Endothelial cell of umbilical vein (primary cell): ENCODE measurements at regions of chr1 and their contacts with region 1.

Region 1: GRCh38 chr1:61641578-61642336 is 83.2 kb downstream of the TM2D1 start:
- DNase-seq: peak; percentile 75
- H3K4me3 ChIP-seq: peak overlapping the region in 1 of 3 experiments; percentile 37
- H3K27ac ChIP-seq: no peak overlapping the region
- H3K4me1 ChIP-seq: peaks cover 7% of the 10 kb centered on the region
- H3K27me3 ChIP-seq: no peaks in the 10 kb centered on the region
- CTCF ChIP-seq: peak; percentile 60 to 90
- POLR2A ChIP-seq: no peak

Region 2: GRCh38 chr1:60153961-60154360 is 1487.8 kb before region 1 on chr1:
- CTCF ChIA-PET with region 1: no interaction called
- POLR2A ChIA-PET with region 1: no interaction called
- dilution Hi-C with region 1: no loop called
- intact Hi-C with region 1: loop called (anchors 10 kb)
- DNase-seq: no peak
- H3K4me3 ChIP-seq: no peak overlapping the region
- H3K27ac ChIP-seq: no peak overlapping the region
- H3K4me1 ChIP-seq: no peaks in the 10 kb centered on the region
- H3K27me3 ChIP-seq: no peaks in the 10 kb centered on the region
- CTCF ChIP-seq: no peak
- POLR2A ChIP-seq: no peak

Region 3: GRCh38 chr1:60969971-60970509 is 671.7 kb before region 1 on chr1:
- CTCF ChIA-PET with region 1: no interaction called
- POLR2A ChIA-PET with region 1: no interaction called
- dilution Hi-C with region 1: no loop called
- intact Hi-C with region 1: loop called (anchors 1 kb)
- DNase-seq: peak; percentile 57
- H3K4me3 ChIP-seq: no peak overlapping the region
- H3K27ac ChIP-seq: no peak overlapping the region
- H3K4me1 ChIP-seq: peaks cover 5% of the 10 kb centered on the region
- H3K27me3 ChIP-seq: no peaks in the 10 kb centered on the region
- CTCF ChIP-seq: peak in 1 of 2 donors; percentile 21
- POLR2A ChIP-seq: no peak

Region 4: DNA sequence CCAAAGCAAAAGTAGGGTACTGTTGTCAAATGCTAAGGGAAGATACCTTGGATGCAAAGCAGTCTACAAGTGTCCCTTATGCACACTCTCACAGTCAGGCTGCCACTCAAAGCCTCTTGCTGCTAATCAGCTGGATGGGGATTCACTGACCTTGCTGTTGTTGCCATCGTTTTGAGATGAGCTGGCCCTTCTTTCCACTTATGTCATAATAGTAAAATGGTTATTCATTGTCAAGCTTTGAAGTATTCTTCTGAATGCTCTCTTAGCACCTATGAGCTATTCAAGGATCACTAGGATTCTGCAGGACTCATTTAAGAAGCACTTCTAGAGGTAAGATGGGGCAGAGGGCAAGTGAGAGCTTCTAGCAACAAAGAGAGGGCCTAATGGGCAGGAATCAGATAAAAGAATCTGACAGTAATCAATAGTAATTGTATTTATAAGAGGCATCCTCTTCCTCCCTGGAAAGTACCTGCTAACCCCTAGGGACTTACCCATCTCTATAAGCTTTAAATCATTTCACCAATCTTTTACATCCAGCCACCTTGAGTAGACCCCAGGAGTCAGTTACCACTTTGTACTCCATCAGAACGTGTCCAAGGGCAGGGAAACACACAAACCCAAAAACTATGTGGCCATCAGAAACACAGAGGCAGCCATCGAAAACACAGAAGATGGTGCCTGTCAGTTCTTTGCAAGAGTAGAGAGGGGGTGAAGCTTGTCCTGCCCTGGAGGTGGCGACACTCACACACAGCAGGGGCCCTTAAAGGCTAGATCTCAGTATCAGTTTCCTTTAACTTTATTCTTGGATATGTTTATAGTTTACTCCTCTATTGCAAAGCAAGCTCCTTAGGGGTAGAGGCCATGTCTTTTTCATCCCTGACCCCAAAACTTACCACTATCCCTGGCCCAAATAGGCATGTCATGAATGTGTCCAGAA is 663.1 kb before region 1 on chr1:
- CTCF ChIA-PET with region 1: interaction called, 15 read pairs
- POLR2A ChIA-PET with region 1: no interaction called
- dilution Hi-C with region 1: no loop called
- intact Hi-C with region 1: no loop called
- DNase-seq: peak; percentile 69
- H3K4me3 ChIP-seq: no peak overlapping the region
- H3K27ac ChIP-seq: no peak overlapping the region
- H3K4me1 ChIP-seq: peaks cover 6% of the 10 kb centered on the region
- H3K27me3 ChIP-seq: no peaks in the 10 kb centered on the region
- CTCF ChIP-seq: peak; percentile 60 to 77
- POLR2A ChIP-seq: no peak

Region 5: DNA sequence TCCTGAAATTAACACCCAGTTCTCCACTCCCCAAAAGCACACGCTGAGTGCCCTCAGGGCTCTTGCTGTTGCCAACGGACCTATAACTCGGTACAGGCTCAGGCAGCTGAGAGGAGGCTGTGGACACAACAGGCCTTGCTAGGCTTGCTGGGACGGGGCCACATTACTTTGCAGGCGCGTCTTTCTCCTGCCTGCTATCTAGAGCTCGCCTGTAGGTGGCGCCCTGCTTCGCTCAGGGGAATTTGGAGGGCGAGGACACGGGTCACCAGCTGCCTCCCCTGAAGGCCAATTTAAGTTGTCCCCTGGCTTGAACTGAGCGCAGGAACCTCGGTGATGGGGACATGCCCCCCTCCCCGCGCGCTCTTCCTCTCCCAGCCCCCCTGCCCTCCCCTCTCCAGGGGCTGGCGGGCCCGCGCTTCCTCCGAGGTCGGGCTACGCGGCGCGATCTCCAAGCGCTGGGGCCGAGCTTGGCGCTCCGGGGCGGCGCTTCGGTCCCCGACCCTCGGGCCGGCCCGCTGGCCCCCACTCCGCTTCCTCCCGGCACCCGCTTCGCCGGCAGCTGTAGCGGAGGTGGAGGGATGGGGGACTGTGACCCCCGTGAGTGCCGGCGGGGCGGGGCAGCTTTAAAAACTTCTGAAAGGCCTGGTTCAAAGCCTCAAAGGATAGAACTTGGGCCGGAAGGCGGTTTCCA is 591.8 kb before region 1 on chr1:
- CTCF ChIA-PET with region 1: interaction called, 20 read pairs
- POLR2A ChIA-PET with region 1: no interaction called
- dilution Hi-C with region 1: no loop called
- intact Hi-C with region 1: loop called (anchors 2 kb)
- DNase-seq: peak; percentile 93
- H3K4me3 ChIP-seq: peak overlapping the region; percentile 62 to 95 (median 92)
- H3K27ac ChIP-seq: peak overlapping the region; percentile 84
- H3K4me1 ChIP-seq: peaks cover 16% of the 10 kb centered on the region
- H3K27me3 ChIP-seq: no peaks in the 10 kb centered on the region
- CTCF ChIP-seq: peak; percentile 89 to 96
- POLR2A ChIP-seq: peak; percentile 40

Region 6: DNA sequence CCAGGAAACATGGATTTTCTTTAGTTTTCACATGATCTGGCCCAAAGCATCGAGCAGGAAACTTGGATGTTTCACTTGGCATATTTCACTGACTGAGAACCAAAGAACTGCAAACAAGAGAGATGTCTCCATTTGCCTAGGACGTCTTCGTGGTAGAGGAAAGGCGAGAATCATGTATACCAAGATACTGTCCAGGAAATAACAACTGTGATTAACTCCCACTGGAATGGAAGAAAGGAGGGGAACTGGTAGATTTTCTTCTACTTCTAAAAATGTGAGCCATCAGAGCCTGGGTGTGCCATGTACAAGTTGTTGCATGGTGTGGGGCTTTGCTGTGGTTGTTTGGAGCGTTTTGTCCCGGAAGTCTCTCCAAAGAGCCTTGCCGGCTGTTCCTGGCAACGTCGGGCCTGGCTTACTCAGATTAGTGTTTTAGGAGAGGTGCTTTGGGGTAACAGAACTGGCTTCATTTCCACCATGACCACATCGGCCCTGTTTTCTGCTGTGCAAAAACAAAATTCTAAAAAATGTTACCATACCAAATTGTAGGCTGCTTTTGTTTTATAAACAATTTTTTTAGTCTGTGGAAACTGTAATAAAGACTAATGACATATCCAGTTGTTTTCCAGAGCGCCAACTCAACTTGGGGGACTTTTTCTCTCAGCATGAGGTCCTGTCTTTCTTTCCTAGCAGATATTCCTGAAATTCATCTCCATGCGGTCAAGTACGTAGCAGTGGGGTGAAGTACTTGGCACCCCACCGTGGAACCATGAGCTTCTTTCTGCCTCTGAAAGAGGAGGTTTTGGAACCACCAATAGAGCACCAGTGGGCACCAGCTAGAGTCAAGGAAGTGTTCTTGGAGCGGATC is 35.1 kb before region 1 on chr1:
- CTCF ChIA-PET with region 1: interaction called, 3 read pairs
- POLR2A ChIA-PET with region 1: no interaction called
- dilution Hi-C with region 1: no loop called
- intact Hi-C with region 1: loop called (anchors 2 kb)
- DNase-seq: peak; percentile 92
- H3K4me3 ChIP-seq: peak overlapping the region in 1 of 3 experiments; percentile 31
- H3K27ac ChIP-seq: peak overlapping the region; percentile 86
- H3K4me1 ChIP-seq: peaks cover 22% of the 10 kb centered on the region
- H3K27me3 ChIP-seq: no peaks in the 10 kb centered on the region
- CTCF ChIP-seq: no peak
- POLR2A ChIP-seq: no peak

Region 7: GRCh38 chr1:61654082-61654481 is 12.3 kb after region 1 on chr1:
- CTCF ChIA-PET with region 1: interaction called, 11 read pairs
- POLR2A ChIA-PET with region 1: no interaction called
- dilution Hi-C with region 1: no loop called
- intact Hi-C with region 1: no loop called
- DNase-seq: no peak
- H3K4me3 ChIP-seq: no peak overlapping the region
- H3K27ac ChIP-seq: no peak overlapping the region
- H3K4me1 ChIP-seq: no peaks in the 10 kb centered on the region
- H3K27me3 ChIP-seq: no peaks in the 10 kb centered on the region
- CTCF ChIP-seq: no peak
- POLR2A ChIP-seq: no peak